Activated naive CD4-positive, alpha-beta T cell treated with anti-CD3 and anti-CD28 coated beads for 36 hours (primary cell): ENCODE measurements at regions of chr4 and their contacts with region 1.

Region 1: DNA sequence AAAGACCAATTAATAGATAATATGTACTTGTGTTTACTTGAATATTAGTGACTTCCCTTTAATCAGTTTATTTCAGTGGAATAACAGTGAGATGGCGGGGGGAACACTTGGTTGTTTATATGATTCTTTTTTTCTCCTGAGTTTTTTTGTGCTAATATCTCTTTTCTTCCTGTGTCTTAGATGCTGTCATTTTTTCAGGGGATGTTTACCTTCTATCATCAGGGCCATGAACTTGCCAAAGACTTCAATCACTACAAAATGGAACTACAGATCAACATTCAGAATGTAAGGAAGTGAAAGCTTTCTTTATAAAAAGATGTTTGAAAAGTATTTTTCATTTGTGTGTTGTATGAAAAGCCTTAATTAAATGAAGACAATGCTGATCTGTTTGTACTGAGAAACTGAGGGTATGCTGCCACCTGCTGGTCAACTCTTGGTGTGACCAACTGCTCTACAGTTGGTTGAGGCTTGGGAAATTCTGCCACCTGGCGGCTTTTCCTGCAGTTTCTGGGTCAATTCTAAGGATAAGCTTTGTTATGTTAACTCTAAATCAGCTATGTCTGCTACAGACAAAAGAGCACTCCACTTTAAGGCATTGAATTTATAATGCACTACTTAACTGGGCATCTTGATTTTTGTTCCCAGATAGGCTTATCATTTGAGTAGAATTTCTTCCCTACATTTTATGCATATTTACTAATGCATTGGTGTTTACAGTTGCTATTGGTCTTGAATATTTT is 134.8 kb downstream of the ARHGAP10 start:
- DNase-seq: peak; percentile 98
- H3K4me3 Mint-ChIP-seq: no peak overlapping the region
- H3K27ac Mint-ChIP-seq: no peak overlapping the region
- H3K4me1 Mint-ChIP-seq: no peaks in the 10 kb centered on the region
- H3K27me3 Mint-ChIP-seq: no peaks in the 10 kb centered on the region

Region 2: GRCh38 chr4:147019061-147019460 is 847.6 kb before region 1 on chr4:
- CTCF ChIA-PET with region 1: no interaction called
- intact Hi-C with region 1: loop called (anchors 5 kb)
- DNase-seq: peak; percentile 77
- H3K4me3 Mint-ChIP-seq: no peak overlapping the region
- H3K27ac Mint-ChIP-seq: no peak overlapping the region
- H3K4me1 Mint-ChIP-seq: no peaks in the 10 kb centered on the region
- H3K27me3 Mint-ChIP-seq: peaks cover 11% of the 10 kb centered on the region

Region 3: GRCh38 chr4:147596981-147597380 is 269.7 kb before region 1 on chr4:
- CTCF ChIA-PET with region 1: interaction called, 13 read pairs
- intact Hi-C with region 1: loop called (anchors 1 kb)
- DNase-seq: no peak
- H3K4me3 Mint-ChIP-seq: no peak overlapping the region
- H3K27ac Mint-ChIP-seq: no peak overlapping the region
- H3K4me1 Mint-ChIP-seq: no peaks in the 10 kb centered on the region
- H3K27me3 Mint-ChIP-seq: no peaks in the 10 kb centered on the region

Region 4: GRCh38 chr4:147683717-147684700 is 182.7 kb before region 1 on chr4 and contains the start of gene PRMT9:
- CTCF ChIA-PET with region 1: interaction called, 15 read pairs
- intact Hi-C with region 1: loop called (anchors 1 kb)
- DNase-seq: peak; percentile 91
- H3K4me3 Mint-ChIP-seq: peak within 1 kb of the TSS; percentile 90
- H3K27ac Mint-ChIP-seq: peak within 1 kb of the TSS; percentile 91
- H3K4me1 Mint-ChIP-seq: peaks cover 19% of the 10 kb centered on the region
- H3K27me3 Mint-ChIP-seq: no peaks in the 10 kb centered on the region
- total RNA-seq, gene PRMT9: 7.3 to 8.2 TPM

Region 5: DNA sequence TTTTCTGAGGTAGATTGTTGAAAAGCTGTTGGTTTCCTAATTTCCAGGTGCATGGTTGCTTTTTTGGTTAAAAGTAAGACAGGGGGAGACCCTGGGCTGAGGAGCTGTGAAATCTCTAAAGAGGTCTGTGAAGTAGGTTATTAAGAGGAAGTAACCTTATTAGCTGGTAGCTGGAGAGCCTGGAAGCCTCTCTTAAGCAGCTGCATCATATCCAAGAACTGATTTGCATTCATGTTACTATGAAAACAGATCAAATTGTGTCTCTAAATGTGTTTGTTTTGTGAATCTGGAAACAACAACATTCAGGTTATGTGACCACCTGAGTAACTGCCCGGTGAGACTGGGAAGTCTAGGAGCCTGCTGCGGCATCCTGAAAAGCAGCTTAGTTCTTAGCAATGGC is 80.7 kb before region 1 on chr4:
- CTCF ChIA-PET with region 1: interaction called, 10 read pairs
- intact Hi-C with region 1: no loop called
- DNase-seq: no peak
- H3K4me3 Mint-ChIP-seq: no peak overlapping the region
- H3K27ac Mint-ChIP-seq: no peak overlapping the region
- H3K4me1 Mint-ChIP-seq: peaks cover 8% of the 10 kb centered on the region
- H3K27me3 Mint-ChIP-seq: no peaks in the 10 kb centered on the region

Region 6: GRCh38 chr4:147879676-147880075 is 13.0 kb after region 1 on chr4:
- CTCF ChIA-PET with region 1: interaction called, 49 read pairs
- intact Hi-C with region 1: no loop called
- DNase-seq: no peak
- H3K4me3 Mint-ChIP-seq: no peak overlapping the region
- H3K27ac Mint-ChIP-seq: no peak overlapping the region
- H3K4me1 Mint-ChIP-seq: no peaks in the 10 kb centered on the region
- H3K27me3 Mint-ChIP-seq: no peaks in the 10 kb centered on the region